Right ventricle myocardium inferior (tissue), 1 donor: ENCODE measurements at regions of chr10 and their contacts with region 1.

Region 1: DNA sequence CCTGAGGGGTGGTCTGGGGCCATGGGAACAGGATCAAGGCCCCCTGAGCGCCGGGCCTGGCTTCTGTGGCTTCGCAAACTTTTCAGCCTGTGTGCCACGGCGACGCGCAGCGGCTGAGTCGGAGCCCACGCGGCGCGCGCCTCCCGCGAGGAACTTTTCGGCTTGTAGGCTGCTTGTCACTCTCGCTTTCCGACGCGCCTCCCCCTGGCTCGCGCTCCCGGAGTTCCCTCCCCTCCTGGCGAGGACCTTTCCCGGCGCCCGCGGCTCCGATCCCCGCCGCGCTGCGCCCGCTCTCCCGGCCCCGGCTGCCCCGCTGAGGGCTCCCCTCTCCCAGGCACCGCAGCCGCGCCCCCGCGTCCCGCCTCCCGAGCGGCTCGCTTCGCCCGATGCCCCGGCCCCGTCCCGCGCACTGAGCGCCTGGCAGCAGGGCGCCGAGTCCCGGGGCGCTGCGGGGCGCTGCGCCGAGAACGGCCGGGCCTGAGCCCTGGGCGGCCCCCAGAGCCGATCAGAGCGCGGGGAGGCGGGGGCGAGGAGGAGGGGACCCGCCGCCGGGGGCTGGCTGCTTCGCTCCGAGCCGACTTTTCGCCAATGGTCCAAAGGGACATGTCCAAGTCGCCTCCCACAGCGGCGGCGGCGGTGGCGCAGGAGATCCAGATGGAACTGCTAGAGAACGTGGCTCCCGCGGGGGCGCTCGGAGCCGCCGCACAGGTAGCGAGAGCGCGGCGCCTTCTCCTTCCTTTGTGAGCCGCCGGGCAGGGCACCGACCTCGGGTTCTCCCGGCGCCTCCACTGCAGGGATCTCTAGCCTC is at the start of gene CACNB2:
- DNase-seq: peak; percentile 80
- ATAC-seq: peak; percentile 70
- total RNA-seq, gene CACNB2: 45.6 TPM

Region 2: GRCh38 chr10:17910125-17910789 is 230.1 kb before region 1 on chr10:
- intact Hi-C with region 1: loop called (anchors 2 kb)
- DNase-seq: no peak
- ATAC-seq: no peak

Region 3: DNA sequence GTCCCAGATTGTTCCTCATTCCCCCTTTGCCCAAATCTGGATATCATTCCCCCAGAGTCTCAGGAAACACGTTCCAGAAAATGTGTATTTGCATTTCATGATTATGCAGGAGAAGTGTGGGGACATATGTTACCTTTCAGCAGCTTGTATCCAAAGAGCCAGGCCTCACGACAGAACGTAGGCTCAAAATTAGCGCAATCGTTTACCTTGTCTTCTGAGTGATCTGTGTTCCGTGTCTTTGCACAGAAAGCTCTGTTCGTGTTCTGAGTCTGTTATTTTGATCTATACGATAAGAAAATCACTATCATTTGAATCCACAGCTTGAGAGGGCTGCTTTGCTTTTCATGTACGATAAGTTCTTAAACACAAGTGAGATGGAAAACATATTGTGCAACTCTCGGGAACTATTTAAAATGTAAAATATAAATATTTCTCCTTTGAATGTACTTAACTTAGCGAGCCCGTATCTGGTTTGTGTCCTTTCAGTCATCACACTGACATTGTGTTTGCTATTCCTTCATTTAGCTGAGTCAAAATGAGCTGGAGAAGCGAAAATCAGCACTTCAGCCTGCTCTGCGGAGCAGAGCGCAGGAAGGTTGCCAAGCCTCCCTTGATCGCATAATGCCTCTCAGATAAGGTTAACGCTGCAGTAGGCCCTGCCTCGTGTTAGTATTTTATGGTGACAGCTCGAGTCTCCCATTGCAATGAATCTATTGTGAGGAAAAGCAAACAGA is 80.4 kb before region 1 on chr10:
- intact Hi-C with region 1: no loop called
- DNase-seq: no peak
- ATAC-seq: peak; percentile 86

Region 4: DNA sequence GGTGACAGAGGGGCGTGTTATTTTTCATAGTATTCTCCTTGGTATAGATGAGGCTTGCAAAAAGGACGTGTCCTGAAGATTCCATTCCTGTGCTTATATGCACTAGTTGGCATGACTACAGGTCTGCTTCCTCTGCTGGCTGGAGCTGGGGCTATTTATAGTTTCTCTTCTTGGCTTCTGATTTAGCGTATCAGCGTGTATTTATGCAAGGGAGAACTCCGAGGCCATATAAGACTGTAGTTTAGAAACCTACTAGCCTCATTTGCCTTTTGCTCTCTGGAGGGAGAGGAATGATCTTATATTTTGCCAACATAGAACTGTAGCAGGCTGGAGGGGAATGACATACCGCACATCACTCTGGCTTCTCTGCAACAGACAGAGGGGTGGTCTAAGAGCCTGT is 39.5 kb after region 1 on chr10:
- intact Hi-C with region 1: loop called (anchors 2 kb)
- DNase-seq: no peak
- ATAC-seq: peak; percentile 90

Region 5: GRCh38 chr10:18214691-18215563 is 74.6 kb after region 1 on chr10:
- intact Hi-C with region 1: loop called (anchors 2 kb)
- DNase-seq: no peak
- ATAC-seq: peak; percentile 67

Region 6: GRCh38 chr10:18303851-18304801 is 163.8 kb after region 1 on chr10:
- intact Hi-C with region 1: loop called (anchors 10 kb)
- DNase-seq: no peak
- ATAC-seq: no peak